ENCODE measurements at regions of chr5 and their contacts with region 1.

Region 1: GRCh38 chr5:5141625-5142532 is 1.7 kb downstream of the ADAMTS16 start:
- DNase-seq: peak; percentile 29 to 76 (median 63)
- H3K4me3 ChIP-seq: no peak overlapping the region
- H3K27ac ChIP-seq: no peak overlapping the region
- H3K4me1 ChIP-seq: peaks cover 0 to 6% of the 10 kb centered on the region in 2 donors
- H3K27me3 ChIP-seq: peaks cover 25% of the 10 kb centered on the region
- CTCF ChIP-seq: peak; percentile 73 to 85 (median 78)
- POLR2A ChIP-seq: no peak

Region 2: GRCh38 chr5:5398046-5398445 is 256.2 kb after region 1 on chr5:
- intact Hi-C with region 1: loop called in 1 of 2 experiments (anchors 5 kb)
- DNase-seq: no peak
- H3K4me3 ChIP-seq: no peak overlapping the region
- H3K27ac ChIP-seq: no peak overlapping the region
- H3K4me1 ChIP-seq: no peaks in the 10 kb centered on the region
- H3K27me3 ChIP-seq: no peaks in the 10 kb centered on the region
- CTCF ChIP-seq: no peak
- POLR2A ChIP-seq: no peak

Region 3: DNA sequence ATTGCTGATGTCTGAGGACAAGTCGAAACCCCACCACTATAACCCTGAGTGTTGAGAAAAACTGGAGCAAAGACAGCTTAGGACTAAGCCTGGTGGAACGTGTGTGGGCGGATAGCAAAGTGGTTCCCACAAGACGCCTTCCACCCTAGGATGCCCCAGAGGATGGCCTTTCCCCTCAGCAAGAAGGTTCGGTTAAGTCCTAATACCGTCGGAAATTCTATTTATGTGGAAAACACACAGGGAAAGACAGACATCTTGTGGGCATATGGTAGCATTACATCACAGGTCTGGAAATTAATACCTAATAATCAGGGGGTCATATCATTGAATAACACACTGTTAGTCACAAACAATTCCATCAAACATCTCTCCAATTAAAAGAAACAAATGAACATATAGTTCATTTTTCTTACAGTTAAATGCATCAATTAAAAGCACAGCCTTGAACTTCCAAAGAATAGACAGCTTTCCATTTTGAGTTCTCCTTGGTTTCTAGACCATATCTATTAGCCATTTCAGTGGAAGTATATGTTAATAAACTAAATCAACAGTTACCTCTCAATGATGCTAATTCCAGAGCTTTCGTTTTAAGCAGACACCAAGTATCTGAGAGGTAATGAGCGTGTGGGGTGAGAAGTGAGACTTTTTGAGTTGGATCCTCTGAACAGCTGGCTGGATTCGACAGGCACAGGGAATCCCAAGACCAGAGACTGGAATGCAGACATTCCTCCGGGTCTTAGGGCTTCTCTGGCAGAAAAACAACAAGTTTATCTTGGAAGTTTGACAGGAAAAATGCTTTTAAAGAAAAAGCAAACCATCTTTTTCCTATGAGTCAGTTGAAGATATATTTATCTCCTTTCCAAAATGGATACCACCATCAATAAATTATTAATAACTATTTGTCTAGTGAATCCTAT is 277.7 kb after region 1 on chr5:
- intact Hi-C with region 1: loop called in 1 of 2 experiments (anchors 5 kb)
- DNase-seq: peak in 1 of 7 donors; percentile 11
- H3K4me3 ChIP-seq: no peak overlapping the region
- H3K27ac ChIP-seq: no peak overlapping the region
- H3K4me1 ChIP-seq: peaks cover 14 to 23% of the 10 kb centered on the region in 2 donors
- H3K27me3 ChIP-seq: no peaks in the 10 kb centered on the region
- CTCF ChIP-seq: peak; percentile 52 to 90 (median 72)
- POLR2A ChIP-seq: no peak